Calu3 (cell line): ENCODE measurements at regions of chr14 and their contacts with region 1.

Region 1: GRCh38 chr14:69079183-69079742 is 73.7 kb downstream of the DCAF5 start:
- DNase-seq: peak; percentile 46
- H3K4me3 Mint-ChIP-seq: peak overlapping the region; percentile 54
- H3K27ac Mint-ChIP-seq: peak overlapping the region; percentile 98
- H3K4me1 Mint-ChIP-seq: peaks cover 71% of the 10 kb centered on the region
- H3K27me3 Mint-ChIP-seq: no peaks in the 10 kb centered on the region
- CTCF ChIP-seq: no peak

Region 2: DNA sequence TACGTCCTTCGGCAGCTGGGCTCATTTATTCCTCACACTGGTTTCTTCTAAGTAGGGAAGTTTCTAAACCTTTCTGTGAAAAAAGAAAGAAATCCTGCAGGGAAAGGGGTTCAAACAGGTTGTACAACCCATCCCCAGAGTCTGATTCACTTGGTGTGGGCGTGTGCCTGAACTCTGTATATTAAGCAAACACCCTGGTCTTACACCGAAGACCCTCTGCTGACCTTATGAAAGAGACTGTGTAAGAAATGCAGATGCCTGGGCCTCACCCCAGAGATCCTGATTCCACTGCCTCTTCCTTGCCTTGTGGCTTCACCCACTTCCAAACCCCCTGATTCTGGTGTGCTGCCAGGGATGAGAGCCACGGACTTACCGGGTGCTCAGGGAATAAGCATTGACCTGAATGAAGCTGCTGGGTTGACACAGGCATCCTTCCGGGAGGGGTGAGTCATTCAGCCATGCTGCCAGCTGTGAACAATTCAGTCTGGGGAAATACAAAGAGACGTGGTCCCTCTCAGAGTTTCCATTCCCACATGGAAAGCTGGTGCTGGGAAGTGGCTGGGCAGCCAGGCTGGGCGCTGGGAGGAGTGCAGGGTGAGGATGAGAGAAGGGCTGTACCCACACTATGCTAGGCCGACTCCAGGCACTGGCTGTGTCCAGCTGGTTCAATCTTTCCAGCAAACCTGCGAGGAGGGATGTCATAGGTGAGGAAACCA is 73.7 kb before region 1 on chr14:
- CTCF ChIA-PET with region 1: no interaction called
- intact Hi-C with region 1: loop called (anchors 2 kb)
- DNase-seq: peak; percentile 71
- H3K4me3 Mint-ChIP-seq: peak overlapping the region; percentile 19
- H3K27ac Mint-ChIP-seq: peak overlapping the region; percentile 57
- H3K4me1 Mint-ChIP-seq: peaks cover 42% of the 10 kb centered on the region
- H3K27me3 Mint-ChIP-seq: no peaks in the 10 kb centered on the region
- CTCF ChIP-seq: no peak

Region 3: DNA sequence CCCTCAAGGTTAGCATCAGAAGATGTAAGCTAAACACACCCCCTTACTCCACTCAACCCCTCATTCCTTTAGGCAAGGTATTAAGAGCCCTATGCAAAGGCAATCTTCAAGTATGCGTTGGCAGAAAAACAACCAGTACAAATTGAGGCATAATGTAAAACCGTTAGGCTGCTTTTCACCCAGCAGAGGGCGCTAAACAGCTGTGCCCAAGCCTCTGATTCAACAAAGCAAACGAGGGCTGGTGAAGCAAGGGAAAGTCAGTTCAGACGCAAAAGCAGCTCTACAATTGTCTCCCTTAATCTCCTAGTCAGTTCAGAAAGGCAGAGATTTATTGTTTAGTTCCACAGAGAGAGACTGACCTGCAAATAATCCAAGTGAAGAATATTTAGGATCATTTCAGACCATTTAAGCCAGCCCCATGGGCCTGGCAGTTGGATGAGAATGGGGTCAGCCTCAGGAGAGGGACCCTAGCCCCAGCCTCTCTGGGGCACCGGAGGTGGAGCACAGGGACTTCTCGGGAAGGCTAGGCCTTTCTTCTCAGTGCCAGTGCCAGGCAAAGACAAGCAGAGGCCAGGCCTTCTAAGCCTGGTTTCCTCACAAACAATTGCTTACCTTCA is 50.1 kb after region 1 on chr14:
- CTCF ChIA-PET with region 1: no interaction called
- intact Hi-C with region 1: no loop called
- DNase-seq: peak; percentile 64
- H3K4me3 Mint-ChIP-seq: no peak overlapping the region
- H3K27ac Mint-ChIP-seq: no peak overlapping the region
- H3K4me1 Mint-ChIP-seq: peaks cover 17% of the 10 kb centered on the region
- H3K27me3 Mint-ChIP-seq: no peaks in the 10 kb centered on the region
- CTCF ChIP-seq: peak; percentile 57

Region 4: DNA sequence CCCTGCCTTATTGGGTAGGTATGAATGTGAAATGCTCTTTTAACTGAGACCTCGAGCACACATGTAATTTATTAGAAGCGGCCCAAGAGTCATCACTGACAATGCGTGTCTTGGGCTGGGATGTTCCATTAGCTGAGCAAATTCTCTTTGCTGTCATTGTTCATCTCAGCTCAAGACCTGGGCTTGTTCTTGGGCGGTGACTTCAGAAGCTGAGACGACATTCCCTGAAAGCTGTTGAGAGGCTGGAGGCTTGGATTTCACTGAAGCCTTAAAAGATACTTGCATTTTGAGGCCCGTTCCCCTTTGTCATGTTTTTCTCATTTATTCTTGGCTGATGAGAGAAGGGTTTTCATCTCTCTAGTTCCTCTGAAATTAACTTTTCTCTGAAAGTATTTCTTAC is 515.5 kb after region 1 on chr14:
- CTCF ChIA-PET with region 1: no interaction called
- intact Hi-C with region 1: no loop called
- DNase-seq: no peak
- H3K4me3 Mint-ChIP-seq: no peak overlapping the region
- H3K27ac Mint-ChIP-seq: no peak overlapping the region
- H3K4me1 Mint-ChIP-seq: no peaks in the 10 kb centered on the region
- H3K27me3 Mint-ChIP-seq: no peaks in the 10 kb centered on the region
- CTCF ChIP-seq: no peak

Region 5: GRCh38 chr14:69997849-69998248 is 918.6 kb after region 1 on chr14:
- CTCF ChIA-PET with region 1: no interaction called
- intact Hi-C with region 1: no loop called
- DNase-seq: peak; percentile 49
- H3K4me3 Mint-ChIP-seq: no peak overlapping the region
- H3K27ac Mint-ChIP-seq: peak overlapping the region; percentile 92
- H3K4me1 Mint-ChIP-seq: peaks cover 26% of the 10 kb centered on the region
- H3K27me3 Mint-ChIP-seq: no peaks in the 10 kb centered on the region
- CTCF ChIP-seq: no peak